Activated naive CD4-positive, alpha-beta T cell treated with anti-CD3 and anti-CD28 coated beads for 36 hours (primary cell): ENCODE measurements at regions of chr20 and their contacts with region 1.

Region 1: DNA sequence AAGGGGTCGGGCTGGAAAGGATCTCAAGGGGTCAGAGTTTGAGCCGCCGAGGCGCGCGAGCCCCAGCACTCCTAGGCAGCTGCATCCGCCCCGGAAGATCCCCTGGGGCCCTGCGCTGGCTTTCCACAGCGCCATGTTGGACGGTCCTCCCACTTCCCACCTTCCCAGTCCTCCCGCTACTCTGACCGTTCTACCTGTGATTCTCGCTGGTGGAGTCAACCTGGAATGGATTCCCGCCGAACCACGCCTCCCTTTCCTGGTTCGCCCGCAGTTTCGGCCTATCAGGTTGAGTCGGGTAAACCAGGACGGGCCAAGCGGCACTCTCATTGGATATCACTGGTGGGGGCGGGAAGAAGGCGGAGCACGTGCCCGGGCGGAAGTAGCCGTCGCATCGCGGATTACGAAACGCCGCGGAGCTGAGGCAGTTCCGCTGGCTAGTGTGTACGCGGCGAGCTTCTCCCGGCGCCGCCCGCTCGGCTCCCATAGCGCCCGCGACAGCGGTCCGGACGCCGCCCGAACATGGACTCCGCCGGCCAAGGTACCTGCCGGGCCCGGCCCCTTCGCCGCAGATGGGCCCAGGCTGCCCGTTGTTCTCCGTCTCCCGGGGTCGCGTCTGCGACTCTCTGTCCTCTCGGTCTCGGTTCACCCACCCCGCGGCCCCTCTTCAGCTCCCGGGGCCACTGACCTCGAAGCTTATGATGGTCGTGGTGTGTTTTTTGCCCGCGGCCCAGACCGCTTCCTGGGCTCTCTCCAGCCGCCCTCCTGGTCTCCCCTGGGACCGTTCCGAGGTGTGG is at the start of gene TPD52L2:
- DNase-seq: peak; percentile 99
- H3K4me3 Mint-ChIP-seq: peak within 1 kb of the TSS; percentile 87
- H3K27ac Mint-ChIP-seq: peak within 1 kb of the TSS; percentile 94
- H3K4me1 Mint-ChIP-seq: peaks cover 24% of the 10 kb centered on the region
- H3K27me3 Mint-ChIP-seq: no peaks in the 10 kb centered on the region
- total RNA-seq, gene TPD52L2: 38.2 to 38.9 TPM

Region 2: GRCh38 chr20:63216041-63216848 is 648.8 kb before region 1 on chr20 and contains the start of gene YTHDF1:
- CTCF ChIA-PET with region 1: no interaction called
- intact Hi-C with region 1: loop called (anchors 1 kb)
- DNase-seq: peak; percentile 97
- H3K4me3 Mint-ChIP-seq: peak within 1 kb of the TSS; percentile 94
- H3K27ac Mint-ChIP-seq: peak within 1 kb of the TSS; percentile 87
- H3K4me1 Mint-ChIP-seq: peaks cover 47% of the 10 kb centered on the region
- H3K27me3 Mint-ChIP-seq: no peaks in the 10 kb centered on the region
- total RNA-seq, gene YTHDF1: 27.6 to 27.8 TPM

Region 3: GRCh38 chr20:63627129-63627750 is 237.8 kb before region 1 on chr20:
- CTCF ChIA-PET with region 1: no interaction called
- intact Hi-C with region 1: loop called (anchors 2 kb)
- DNase-seq: peak; percentile 94
- H3K4me3 Mint-ChIP-seq: peak overlapping the region; percentile 99
- H3K27ac Mint-ChIP-seq: peak overlapping the region; percentile 74
- H3K4me1 Mint-ChIP-seq: peaks cover 52% of the 10 kb centered on the region
- H3K27me3 Mint-ChIP-seq: no peaks in the 10 kb centered on the region

Region 4: DNA sequence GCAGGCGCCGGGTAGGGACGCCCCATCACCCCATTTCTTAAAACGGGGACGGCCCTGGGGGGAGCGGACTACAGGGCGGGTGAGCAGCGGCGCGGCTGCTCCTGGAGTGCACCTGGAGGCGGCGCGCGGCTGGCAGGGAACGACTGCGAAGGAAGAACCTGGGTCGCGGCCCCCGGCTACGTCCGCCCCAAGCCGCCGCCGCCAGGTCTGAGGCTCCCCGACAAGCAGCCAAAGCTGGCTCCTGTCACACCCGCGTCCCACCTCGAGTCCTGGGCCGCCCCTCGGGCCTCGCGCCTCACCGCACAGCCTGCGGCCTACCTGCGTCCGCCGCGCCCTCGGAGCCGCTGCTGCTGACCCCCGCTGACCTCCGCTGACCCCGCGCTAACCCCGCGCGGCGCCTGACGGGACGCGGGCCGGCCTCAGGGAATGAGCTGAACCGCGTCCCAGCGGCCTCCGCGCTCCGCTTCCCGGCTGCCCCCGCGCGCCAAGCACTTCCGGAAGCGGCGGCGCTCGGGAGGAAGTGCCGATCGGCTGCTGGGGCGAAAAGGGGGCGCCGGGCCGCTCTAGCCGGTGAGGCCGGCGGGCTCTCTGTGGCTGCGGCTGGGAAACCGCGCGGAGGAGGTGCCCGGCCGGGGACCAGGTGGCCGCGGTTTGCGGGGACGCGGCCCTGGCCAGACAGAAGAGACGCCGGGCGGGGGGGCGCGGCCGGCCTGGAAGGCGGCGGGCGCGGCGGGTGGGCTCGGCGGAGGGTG is 157.3 kb before region 1 on chr20 and contains the starts of genes ARFRP1 and ZGPAT:
- CTCF ChIA-PET with region 1: no interaction called
- intact Hi-C with region 1: loop called (anchors 1 kb)
- DNase-seq: peak; percentile 90
- H3K4me3 Mint-ChIP-seq: peak within 1 kb of the TSS; percentile 80
- H3K27ac Mint-ChIP-seq: peak within 1 kb of the TSS; percentile 86
- H3K4me1 Mint-ChIP-seq: peaks cover 46% of the 10 kb centered on the region
- H3K27me3 Mint-ChIP-seq: no peaks in the 10 kb centered on the region
- total RNA-seq, gene ARFRP1: 45.6 to 49.2 TPM
- total RNA-seq, gene ZGPAT: 15.3 to 18.0 TPM

Region 5: GRCh38 chr20:63782051-63782471 is 83.0 kb before region 1 on chr20:
- CTCF ChIA-PET with region 1: interaction called, 9 read pairs
- intact Hi-C with region 1: loop called (anchors 1 kb)
- DNase-seq: peak; percentile 65
- H3K4me3 Mint-ChIP-seq: no peak overlapping the region
- H3K27ac Mint-ChIP-seq: no peak overlapping the region
- H3K4me1 Mint-ChIP-seq: peaks cover 11% of the 10 kb centered on the region
- H3K27me3 Mint-ChIP-seq: no peaks in the 10 kb centered on the region

Region 6: GRCh38 chr20:63955827-63956663 is 91.0 kb after region 1 on chr20 and contains the start of gene UCKL1:
- CTCF ChIA-PET with region 1: no interaction called
- intact Hi-C with region 1: loop called (anchors 2 kb)
- DNase-seq: peak; percentile 91
- H3K4me3 Mint-ChIP-seq: peak within 1 kb of the TSS; percentile 79
- H3K27ac Mint-ChIP-seq: peak within 1 kb of the TSS; percentile 85
- H3K4me1 Mint-ChIP-seq: peaks cover 39% of the 10 kb centered on the region
- H3K27me3 Mint-ChIP-seq: no peaks in the 10 kb centered on the region
- total RNA-seq, gene UCKL1: 23.3 to 23.9 TPM